ENCODE measurements at regions of chr19 and their contacts with region 1.

Region 1: GRCh38 chr19:13155472-13156359 is 5.5 kb downstream of the IER2 start:
- DNase-seq: peak; percentile 81 to 86
- H3K4me3 ChIP-seq: peak overlapping the region; percentile 99; the same call in 1 of the 2 replicates
- H3K4me3 Mint-ChIP-seq: peak overlapping the region; percentile 83
- H3K27ac Mint-ChIP-seq: peak overlapping the region; percentile 98
- H3K4me1 ChIP-seq: peaks cover 16% of the 10 kb centered on the region
- H3K4me1 Mint-ChIP-seq: peaks cover 17% of the 10 kb centered on the region
- H3K27me3 ChIP-seq: no peaks in the 10 kb centered on the region
- H3K27me3 Mint-ChIP-seq: peaks cover 4% of the 10 kb centered on the region
- CTCF ChIP-seq: no peak

Region 2: GRCh38 chr19:13169810-13170209 is 14.1 kb after region 1 on chr19:
- CTCF ChIA-PET with region 1: interaction called, 4 read pairs
- POLR2A ChIA-PET with region 1: interaction called, 29 read pairs
- intact Hi-C with region 1: loop called (anchors 2 kb)
- DNase-seq: peak; percentile 76 to 86
- H3K4me3 ChIP-seq: no peak overlapping the region
- H3K4me3 Mint-ChIP-seq: peak overlapping the region; percentile 46
- H3K27ac Mint-ChIP-seq: peak overlapping the region; percentile 87
- H3K4me1 ChIP-seq: peaks cover 46% of the 10 kb centered on the region
- H3K4me1 Mint-ChIP-seq: peaks cover 24% of the 10 kb centered on the region
- H3K27me3 ChIP-seq: no peaks in the 10 kb centered on the region
- H3K27me3 Mint-ChIP-seq: no peaks in the 10 kb centered on the region
- CTCF ChIP-seq: no peak